PC-9 (cell line): ENCODE measurements at regions of chr14 and their contacts with region 1.

Region 1: GRCh38 chr14:67111022-67111421 is 78.2 kb upstream of the GARIN2 start:
- DNase-seq: no peak
- H3K4me3 ChIP-seq: no peak overlapping the region
- H3K27ac ChIP-seq: no peak overlapping the region
- H3K4me1 ChIP-seq: no peaks in the 10 kb centered on the region
- H3K27me3 ChIP-seq: no peaks in the 10 kb centered on the region
- CTCF ChIP-seq: no peak

Region 2: GRCh38 chr14:66495218-66496098 is 615.6 kb before region 1 on chr14:
- CTCF ChIA-PET with region 1: no interaction called
- POLR2A ChIA-PET with region 1: no interaction called
- intact Hi-C with region 1: loop called (anchors 10 kb)
- DNase-seq: peak; percentile 33 to 62
- H3K4me3 ChIP-seq: no peak overlapping the region
- H3K27ac ChIP-seq: no peak overlapping the region
- H3K4me1 ChIP-seq: no peaks in the 10 kb centered on the region
- H3K27me3 ChIP-seq: no peaks in the 10 kb centered on the region
- CTCF ChIP-seq: peak; percentile 85

Region 3: GRCh38 chr14:66624299-66624937 is 486.6 kb before region 1 on chr14:
- CTCF ChIA-PET with region 1: interaction called, 3 read pairs
- POLR2A ChIA-PET with region 1: no interaction called
- intact Hi-C with region 1: loop called (anchors 10 kb)
- DNase-seq: peak in 1 of 2 experiments; percentile 53
- H3K4me3 ChIP-seq: no peak overlapping the region
- H3K27ac ChIP-seq: no peak overlapping the region
- H3K4me1 ChIP-seq: no peaks in the 10 kb centered on the region
- H3K27me3 ChIP-seq: no peaks in the 10 kb centered on the region
- CTCF ChIP-seq: peak; percentile 83

Region 4: GRCh38 chr14:67251573-67252226 is 140.7 kb after region 1 on chr14:
- CTCF ChIA-PET with region 1: no interaction called
- POLR2A ChIA-PET with region 1: interaction called, 11 read pairs
- intact Hi-C with region 1: no loop called
- DNase-seq: peak; percentile 51 to 56
- H3K4me3 ChIP-seq: no peak overlapping the region
- H3K27ac ChIP-seq: no peak overlapping the region
- H3K4me1 ChIP-seq: peaks cover 14% of the 10 kb centered on the region
- H3K27me3 ChIP-seq: no peaks in the 10 kb centered on the region
- CTCF ChIP-seq: no peak